Esophagus muscularis mucosa (tissue), 4 donors: ENCODE measurements at regions of chr19 and their contacts with region 1.

Region 1: DNA sequence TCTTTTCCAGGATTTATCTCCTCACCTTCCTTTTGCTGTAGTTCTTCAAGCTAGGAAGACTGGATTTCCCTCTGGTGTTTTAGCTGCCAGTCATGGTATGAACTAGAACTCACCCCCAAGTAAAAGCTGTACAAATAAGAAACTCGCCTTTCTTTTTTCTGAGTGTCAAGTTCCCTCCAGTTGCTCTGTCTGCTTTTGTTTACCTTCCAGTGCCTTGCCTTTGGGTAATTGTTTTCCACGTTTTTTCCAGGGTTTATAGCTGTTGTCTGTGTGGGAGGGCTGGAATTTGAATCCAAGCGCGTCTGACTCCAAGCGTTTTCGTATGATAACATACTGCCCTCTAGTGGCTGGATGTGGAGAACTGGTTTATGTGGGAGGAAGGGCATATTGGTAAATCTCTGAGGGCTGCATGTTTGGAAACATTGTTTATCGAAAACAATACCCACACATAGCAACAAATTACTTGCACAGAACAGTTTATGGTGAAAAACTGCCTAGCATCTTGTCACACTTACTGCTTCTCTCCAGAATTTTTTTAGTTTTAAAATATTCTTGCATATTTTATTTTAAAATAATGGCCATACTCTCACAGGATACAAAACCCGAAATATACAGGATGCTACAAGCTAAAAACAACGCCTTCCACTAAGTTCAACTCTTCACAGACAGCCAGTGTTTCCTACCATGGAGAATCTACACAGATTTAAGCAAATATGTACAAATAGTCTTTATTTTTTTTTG is 19.2 kb downstream of the RCN3 start:
- DNase-seq: peak; percentile 94
- H3K4me3 ChIP-seq: no peak overlapping the region
- H3K27ac ChIP-seq: no peak overlapping the region
- H3K4me1 ChIP-seq: peaks cover 4 to 9% (median 5%) of the 10 kb centered on the region in 4 donors
- H3K27me3 ChIP-seq: no peaks in the 10 kb centered on the region
- CTCF ChIP-seq: peak; percentile 85 to 94 (median 88)
- EP300 ChIP-seq: no peak
- POLR2A ChIP-seq: no peak

Region 2: DNA sequence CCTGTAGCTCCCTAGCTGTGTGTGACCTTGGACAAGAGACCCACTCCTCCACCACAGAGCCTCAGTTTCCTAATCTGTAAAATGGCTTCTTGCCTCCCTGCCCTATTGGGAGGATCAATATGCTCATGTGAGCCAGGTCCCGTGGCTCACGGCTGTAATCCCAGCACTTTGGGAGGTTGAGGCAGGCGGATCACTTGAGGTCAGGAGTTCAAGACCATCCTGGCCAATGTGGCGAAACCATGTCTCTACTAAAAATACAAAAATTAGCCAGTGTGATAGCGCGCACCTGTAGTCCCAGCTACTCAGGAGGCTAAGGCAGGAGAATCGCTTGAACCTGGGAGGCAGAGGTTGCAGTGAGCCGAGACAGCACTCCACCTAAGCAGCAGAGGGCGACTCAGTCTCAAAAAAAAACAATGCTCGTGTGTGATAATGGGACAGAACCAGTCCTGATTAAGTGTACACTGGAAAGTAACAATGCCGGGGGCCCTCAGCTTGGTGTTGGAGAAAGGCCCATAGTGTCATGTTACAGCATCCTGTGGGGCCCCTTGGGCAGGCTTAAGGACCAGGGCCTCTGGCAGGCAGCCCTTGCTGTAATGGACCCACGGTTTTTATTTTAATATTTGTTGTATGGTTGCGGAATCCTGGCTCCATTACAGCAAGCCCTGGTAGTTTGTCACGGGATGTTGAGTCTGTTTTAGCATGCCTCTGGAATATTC is 44.0 kb before region 1 on chr19:
- intact Hi-C with region 1: loop called (anchors 2 kb)
- DNase-seq: no peak
- H3K4me3 ChIP-seq: no peak overlapping the region
- H3K27ac ChIP-seq: no peak overlapping the region
- H3K4me1 ChIP-seq: peaks cover 17 to 45% (median 42%) of the 10 kb centered on the region in 4 donors
- H3K27me3 ChIP-seq: no peaks in the 10 kb centered on the region
- CTCF ChIP-seq: peak; percentile 54 to 75 (median 69)
- EP300 ChIP-seq: no peak
- POLR2A ChIP-seq: no peak

Region 3: GRCh38 chr19:49590071-49590970 is 43.3 kb after region 1 on chr19:
- intact Hi-C with region 1: no loop called
- DNase-seq: peak; percentile 99
- H3K4me3 ChIP-seq: peak overlapping the region; percentile 85 to 96 (median 92)
- H3K27ac ChIP-seq: peak overlapping the region; percentile 84 to 96 (median 94)
- H3K4me1 ChIP-seq: peaks cover 22 to 44% (median 40%) of the 10 kb centered on the region in 4 donors
- H3K27me3 ChIP-seq: no peaks in the 10 kb centered on the region
- CTCF ChIP-seq: peak in 1 of 3 experiments; percentile 16
- EP300 ChIP-seq: no peak
- POLR2A ChIP-seq: no peak